Calu3 (cell line): ENCODE measurements at regions of chr17 and their contacts with region 1.

Region 1: GRCh38 chr17:17356149-17356930 is 53.2 kb downstream of the NT5M start:
- DNase-seq: peak; percentile 74
- H3K4me3 Mint-ChIP-seq: no peak overlapping the region
- H3K27ac Mint-ChIP-seq: no peak overlapping the region
- H3K4me1 Mint-ChIP-seq: peaks cover 8% of the 10 kb centered on the region
- H3K27me3 Mint-ChIP-seq: peaks cover 43% of the 10 kb centered on the region
- CTCF ChIP-seq: peak; percentile 88

Region 2: DNA sequence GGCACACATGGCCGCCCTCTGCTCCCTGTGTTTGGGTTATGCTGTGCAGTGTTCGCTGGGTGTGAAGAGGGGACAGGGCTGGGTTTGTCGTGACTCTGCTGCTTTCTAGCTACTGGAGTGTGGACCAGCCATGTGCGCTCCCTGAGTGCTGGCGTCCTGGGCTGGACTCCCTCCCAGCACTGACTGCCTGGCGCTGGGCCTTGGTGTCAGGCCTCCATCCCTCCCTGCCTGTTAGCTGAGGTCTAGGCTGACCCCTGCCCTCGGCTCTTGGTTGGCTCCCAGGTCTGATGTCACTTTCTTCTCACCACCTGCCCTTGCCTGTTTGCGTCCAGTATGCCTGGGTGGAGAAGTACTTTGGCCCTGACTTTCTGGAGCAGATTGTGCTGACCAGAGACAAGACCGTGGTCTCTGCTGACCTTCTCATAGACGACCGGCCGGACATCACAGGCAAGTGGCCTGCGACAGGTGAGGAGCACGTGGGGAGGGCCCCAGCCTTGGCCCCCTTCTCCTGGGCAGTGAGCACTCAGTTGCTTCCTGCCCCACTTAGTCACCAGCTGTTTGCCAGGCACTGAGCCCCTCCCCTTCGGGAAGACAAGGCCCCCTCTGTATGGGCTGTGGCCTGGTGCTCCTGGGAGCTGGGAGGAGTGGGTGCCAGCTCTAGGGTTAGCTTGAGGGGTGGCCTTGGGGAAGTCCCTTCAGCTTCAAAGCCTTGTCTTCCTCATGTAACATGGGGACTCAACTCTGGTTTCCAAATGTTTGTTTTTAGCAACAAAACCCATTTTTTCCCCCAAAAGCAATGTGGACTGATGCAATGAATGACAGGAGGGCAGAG is 11.7 kb before region 1 on chr17:
- CTCF ChIA-PET with region 1: no interaction called
- intact Hi-C with region 1: no loop called
- DNase-seq: no peak
- H3K4me3 Mint-ChIP-seq: no peak overlapping the region
- H3K27ac Mint-ChIP-seq: no peak overlapping the region
- H3K4me1 Mint-ChIP-seq: no peaks in the 10 kb centered on the region
- H3K27me3 Mint-ChIP-seq: peaks cover 16% of the 10 kb centered on the region
- CTCF ChIP-seq: no peak

Region 3: GRCh38 chr17:17568749-17569195 is 212.4 kb after region 1 on chr17:
- CTCF ChIA-PET with region 1: interaction called, 4 read pairs
- intact Hi-C with region 1: loop called (anchors 1 kb)
- DNase-seq: peak; percentile 86
- H3K4me3 Mint-ChIP-seq: no peak overlapping the region
- H3K27ac Mint-ChIP-seq: no peak overlapping the region
- H3K4me1 Mint-ChIP-seq: no peaks in the 10 kb centered on the region
- H3K27me3 Mint-ChIP-seq: no peaks in the 10 kb centered on the region
- CTCF ChIP-seq: peak; percentile 23

Region 4: GRCh38 chr17:17641621-17642409 is 285.5 kb after region 1 on chr17:
- CTCF ChIA-PET with region 1: interaction called, 5 read pairs
- intact Hi-C with region 1: loop called (anchors 1 kb)
- DNase-seq: peak; percentile 75
- H3K4me3 Mint-ChIP-seq: no peak overlapping the region
- H3K27ac Mint-ChIP-seq: no peak overlapping the region
- H3K4me1 Mint-ChIP-seq: no peaks in the 10 kb centered on the region
- H3K27me3 Mint-ChIP-seq: peaks cover 25% of the 10 kb centered on the region
- CTCF ChIP-seq: peak; percentile 75